T-cell (primary cell): ENCODE measurements at regions of chr1 and their contacts with region 1.

Region 1: DNA sequence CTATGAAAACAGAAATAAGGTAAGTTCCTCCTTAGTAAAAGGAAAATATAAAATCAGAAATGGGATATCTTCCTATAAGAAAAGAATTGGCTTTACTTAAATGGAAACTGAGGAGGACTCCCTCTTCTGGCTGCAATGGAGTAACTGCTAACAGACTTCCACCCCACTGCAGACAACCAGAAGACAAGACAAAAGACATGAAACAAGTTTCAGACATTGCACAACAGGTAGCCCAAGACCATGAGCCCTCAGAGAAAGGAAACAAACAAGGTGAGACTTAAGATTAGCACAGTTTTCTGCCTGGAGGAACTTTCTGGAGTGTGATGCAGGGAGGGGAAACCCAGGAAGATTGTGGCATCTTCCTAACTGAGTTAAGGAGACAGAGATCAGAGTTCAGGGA is 17.0 kb upstream of the OLFML2B start:
- DNase-seq: peak in 1 of 35 experiments; percentile 12
- ATAC-seq: no peak
- H3K4me3 ChIP-seq: no peak overlapping the region
- H3K4me3 Mint-ChIP-seq: no peak overlapping the region
- H3K27ac ChIP-seq: no peak overlapping the region
- H3K27ac Mint-ChIP-seq: no peak overlapping the region
- H3K4me1 ChIP-seq: no peaks in the 10 kb centered on the region
- H3K4me1 Mint-ChIP-seq: peaks cover 0 to 7% (median 0%) of the 10 kb centered on the region in 3 donors
- H3K27me3 ChIP-seq: peaks cover 0 to 3% of the 10 kb centered on the region in 2 experiments
- H3K27me3 Mint-ChIP-seq: peaks cover 13 to 20% of the 10 kb centered on the region in 2 donors

Region 2: DNA sequence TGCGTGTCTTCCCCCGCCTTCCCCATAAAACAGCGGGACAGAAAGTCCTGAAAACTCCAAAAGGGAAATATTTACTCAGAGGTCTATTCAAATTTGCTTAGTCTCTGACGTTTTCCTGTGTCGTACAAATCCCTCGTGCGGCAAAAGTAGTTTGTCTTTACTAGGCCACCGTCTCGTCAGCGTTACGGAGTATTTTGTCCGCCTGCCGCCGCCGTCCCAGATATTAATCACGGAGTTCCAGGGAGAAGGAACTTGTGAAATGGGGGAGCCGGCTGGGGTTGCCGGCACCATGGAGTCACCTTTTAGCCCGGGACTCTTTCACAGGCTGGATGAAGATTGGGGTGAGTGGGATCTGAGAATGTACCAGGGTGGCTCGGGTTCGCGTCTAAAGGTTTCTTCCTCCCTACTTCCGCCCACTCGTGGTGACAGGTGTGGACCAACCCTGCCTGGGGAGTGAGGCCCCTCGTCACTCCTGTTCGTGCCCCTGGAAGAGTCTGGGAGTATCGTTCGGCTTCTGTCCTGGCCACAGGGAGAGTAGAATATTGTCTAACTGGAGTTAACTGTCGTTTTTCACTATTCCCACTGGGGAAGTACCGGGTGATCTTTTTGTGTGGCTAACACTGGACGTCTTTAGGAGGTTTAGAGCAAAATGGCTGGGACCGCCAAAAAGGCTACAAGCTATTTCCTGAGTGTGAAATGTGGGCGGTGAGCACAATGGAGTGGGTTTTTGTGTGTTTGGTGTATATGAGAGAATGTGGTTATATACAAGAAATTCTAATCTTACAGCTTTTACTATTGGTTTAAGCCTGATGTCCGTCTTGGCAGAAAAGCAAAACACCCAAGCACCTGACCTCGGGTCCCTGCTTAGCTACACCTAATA is 274.3 kb before region 1 on chr1 and contains the start of gene ATF6:
- CTCF ChIA-PET with region 1: interaction called, 5 to 14 read pairs
- POLR2A ChIA-PET with region 1: interaction called in 1 of 2 experiments, 4 read pairs
- DNase-seq: peak; percentile 63 to 90 (median 73)
- ATAC-seq: peak; percentile 79 to 82 (median 82)
- H3K4me3 ChIP-seq: peak within 1 kb of the TSS; percentile 69 to 97
- H3K4me3 Mint-ChIP-seq: peak within 1 kb of the TSS; percentile 99 to 100 (median 99)
- H3K27ac ChIP-seq: peak within 1 kb of the TSS; percentile 75
- H3K27ac Mint-ChIP-seq: peak within 1 kb of the TSS; percentile 94 to 97
- H3K4me1 ChIP-seq: peaks cover 30 to 35% of the 10 kb centered on the region in 2 experiments
- H3K4me1 Mint-ChIP-seq: peaks cover 42 to 45% (median 45%) of the 10 kb centered on the region in 3 donors
- H3K27me3 ChIP-seq: no peaks in the 10 kb centered on the region
- H3K27me3 Mint-ChIP-seq: no peaks in the 10 kb centered on the region
- total RNA-seq, gene ATF6: 18.7 to 27.6 (median 21.9) TPM

Region 3: DNA sequence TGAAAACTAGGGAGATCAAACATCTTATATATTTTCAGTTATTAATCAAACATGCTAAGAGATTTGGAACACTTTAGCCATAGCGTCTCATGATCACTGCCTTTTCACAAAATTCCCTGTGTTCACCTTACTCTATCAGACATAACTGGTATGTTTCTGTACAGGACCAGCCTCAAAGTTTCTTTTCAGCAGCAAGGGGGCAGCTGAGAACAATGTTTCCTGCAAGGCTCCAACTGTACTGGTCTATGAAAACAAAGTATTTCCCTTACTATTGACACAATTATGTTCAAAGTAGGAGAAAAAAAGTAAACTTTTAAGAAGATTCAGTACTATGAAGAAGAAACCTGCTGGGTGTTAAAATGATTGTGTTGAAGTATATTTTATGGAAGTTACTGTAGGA is 176.1 kb before region 1 on chr1:
- CTCF ChIA-PET with region 1: interaction called, 16 to 22 read pairs
- POLR2A ChIA-PET with region 1: no interaction called
- DNase-seq: peak in 19 of 35 experiments; percentile 1 to 34 (median 4)
- ATAC-seq: no peak
- H3K4me3 ChIP-seq: no peak overlapping the region
- H3K4me3 Mint-ChIP-seq: no peak overlapping the region
- H3K27ac ChIP-seq: no peak overlapping the region
- H3K27ac Mint-ChIP-seq: no peak overlapping the region
- H3K4me1 ChIP-seq: no peaks in the 10 kb centered on the region
- H3K4me1 Mint-ChIP-seq: no peaks in the 10 kb centered on the region
- H3K27me3 ChIP-seq: no peaks in the 10 kb centered on the region
- H3K27me3 Mint-ChIP-seq: no peaks in the 10 kb centered on the region